PC-3 (cell line): ENCODE measurements at regions of chr1 and their contacts with region 1.

Region 1: GRCh38 chr1:113835642-113836307 is 23.5 kb upstream of the RSBN1 start:
- DNase-seq: peak; percentile 75
- ATAC-seq: no peak
- H3K4me3 ChIP-seq: no peak overlapping the region
- H3K27ac ChIP-seq: no peak overlapping the region
- H3K4me1 ChIP-seq: no peaks in the 10 kb centered on the region
- H3K27me3 ChIP-seq: no peaks in the 10 kb centered on the region
- CTCF ChIP-seq: peak; percentile 62

Region 2: DNA sequence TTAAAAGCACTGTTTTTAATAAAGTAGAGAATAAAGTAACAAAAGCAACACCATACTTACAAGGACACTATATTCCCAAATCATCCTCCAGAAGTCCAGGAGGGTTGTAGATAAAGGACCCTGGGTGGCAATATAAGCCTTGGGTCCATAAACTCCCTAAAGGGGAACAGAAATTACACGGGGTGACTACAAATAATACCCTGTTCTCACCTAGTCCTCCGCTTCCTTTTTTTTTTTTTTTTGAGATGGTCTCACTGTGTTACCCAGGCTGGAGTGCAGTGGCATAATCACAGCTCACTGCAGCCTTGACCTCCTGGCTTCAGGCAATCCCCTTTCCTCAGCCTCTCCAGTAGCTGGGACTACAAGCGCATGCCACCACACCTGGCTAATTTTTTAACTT is 22.6 kb after region 1 on chr1:
- CTCF ChIA-PET with region 1: no interaction called
- POLR2A ChIA-PET with region 1: no interaction called
- intact Hi-C with region 1: no loop called
- DNase-seq: no peak
- ATAC-seq: no peak
- H3K4me3 ChIP-seq: no peak overlapping the region
- H3K27ac ChIP-seq: no peak overlapping the region
- H3K4me1 ChIP-seq: peaks cover 13% of the 10 kb centered on the region
- H3K27me3 ChIP-seq: no peaks in the 10 kb centered on the region
- CTCF ChIP-seq: no peak

Region 3: DNA sequence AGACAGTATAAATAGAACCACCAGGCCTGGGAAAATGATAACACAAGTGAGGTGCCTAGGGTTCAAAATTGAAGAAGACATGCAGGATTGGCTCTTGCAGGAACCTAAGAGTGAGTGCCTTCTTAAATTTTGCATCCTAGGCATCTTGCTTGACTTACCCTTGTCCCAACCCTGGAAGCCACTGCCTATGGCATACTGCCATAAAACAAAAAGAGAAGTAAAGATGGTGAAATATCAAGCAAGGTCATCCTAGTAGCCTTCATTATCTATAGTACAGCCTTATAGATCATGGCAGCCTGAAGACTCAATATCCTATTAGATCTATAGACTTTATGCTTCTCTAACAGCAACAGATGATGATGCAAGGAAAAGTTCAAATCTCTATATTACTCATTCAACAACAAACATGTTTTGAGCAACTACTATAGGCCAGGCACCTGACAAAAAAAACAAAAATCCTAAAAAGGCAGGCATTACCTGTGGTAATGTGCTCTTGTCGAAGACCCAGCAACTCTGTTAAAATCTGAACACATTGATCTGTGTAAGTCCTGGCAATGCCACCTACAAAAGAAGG is 62.6 kb after region 1 on chr1:
- CTCF ChIA-PET with region 1: no interaction called
- POLR2A ChIA-PET with region 1: no interaction called
- intact Hi-C with region 1: no loop called
- DNase-seq: no peak
- ATAC-seq: no peak
- H3K4me3 ChIP-seq: no peak overlapping the region
- H3K27ac ChIP-seq: no peak overlapping the region
- H3K4me1 ChIP-seq: peaks cover 1% of the 10 kb centered on the region; the same call in 1 of the 2 replicates
- H3K27me3 ChIP-seq: no peaks in the 10 kb centered on the region
- CTCF ChIP-seq: no peak

Region 4: GRCh38 chr1:113963281-113963906 is 127.6 kb after region 1 on chr1:
- CTCF ChIA-PET with region 1: no interaction called
- POLR2A ChIA-PET with region 1: interaction called, 3 read pairs
- intact Hi-C with region 1: loop called (anchors 5 kb)
- DNase-seq: no peak
- ATAC-seq: no peak
- H3K4me3 ChIP-seq: no peak overlapping the region
- H3K27ac ChIP-seq: no peak overlapping the region
- H3K4me1 ChIP-seq: no peaks in the 10 kb centered on the region
- H3K27me3 ChIP-seq: no peaks in the 10 kb centered on the region
- CTCF ChIP-seq: peak; percentile 40; the same call in 1 of the 2 replicates

Region 5: DNA sequence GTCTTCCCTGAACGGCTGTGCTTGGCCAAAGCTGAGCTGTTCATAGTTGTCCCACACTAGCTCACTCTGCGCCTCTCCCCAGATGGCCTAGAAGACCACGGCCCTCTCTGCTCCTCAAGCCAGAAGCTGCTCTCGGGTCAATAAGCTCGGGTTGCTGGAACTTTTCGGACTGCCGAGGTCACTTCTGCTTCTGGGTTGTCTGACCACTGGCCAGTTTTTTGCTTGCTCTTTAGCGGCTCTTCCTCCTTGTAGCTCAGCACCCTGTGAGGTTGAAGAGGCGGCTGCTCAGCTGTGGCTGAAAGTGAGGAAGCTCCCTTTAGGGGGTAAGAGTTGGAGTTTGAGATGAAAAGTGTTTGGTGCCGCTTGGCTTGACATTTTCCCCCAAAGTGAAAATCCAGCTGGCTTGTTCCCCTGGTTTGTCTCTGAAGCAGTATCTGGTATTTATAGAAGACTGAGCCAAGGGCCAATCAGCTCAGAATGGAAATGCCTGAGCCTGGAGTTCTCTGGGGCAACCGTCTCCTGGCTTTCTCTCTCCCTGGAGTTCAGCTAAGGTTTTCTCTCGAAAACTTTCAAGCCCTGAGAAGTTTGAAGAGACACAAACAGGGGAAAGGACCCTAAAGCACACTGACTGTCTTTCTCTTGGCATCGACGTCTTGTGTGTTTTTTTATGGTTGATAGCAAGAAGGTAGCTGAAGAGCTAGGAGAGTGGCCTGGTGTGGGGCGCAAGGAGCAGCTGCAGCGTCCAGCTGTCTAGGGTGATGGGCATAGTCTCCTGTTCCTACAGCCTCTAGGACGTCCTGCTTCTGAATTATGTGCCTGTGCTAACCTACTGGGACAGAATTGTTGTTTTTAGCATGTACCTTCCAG is 245.9 kb after region 1 on chr1:
- CTCF ChIA-PET with region 1: no interaction called
- POLR2A ChIA-PET with region 1: no interaction called
- intact Hi-C with region 1: no loop called
- DNase-seq: no peak
- ATAC-seq: no peak
- H3K4me3 ChIP-seq: no peak overlapping the region
- H3K27ac ChIP-seq: peak overlapping the region; percentile 95
- H3K4me1 ChIP-seq: peaks cover 47% of the 10 kb centered on the region
- H3K27me3 ChIP-seq: no peaks in the 10 kb centered on the region
- CTCF ChIP-seq: no peak

Region 6: GRCh38 chr1:114282751-114283403 is 447.1 kb after region 1 on chr1:
- CTCF ChIA-PET with region 1: no interaction called
- POLR2A ChIA-PET with region 1: no interaction called
- intact Hi-C with region 1: loop called (anchors 10 kb)
- DNase-seq: peak; percentile 88
- ATAC-seq: peak; percentile 100
- H3K4me3 ChIP-seq: no peak overlapping the region
- H3K27ac ChIP-seq: no peak overlapping the region
- H3K4me1 ChIP-seq: no peaks in the 10 kb centered on the region
- H3K27me3 ChIP-seq: peaks cover 24% of the 10 kb centered on the region
- CTCF ChIP-seq: peak; percentile 91